ENCODE measurements at regions of chr3 and their contacts with region 1.

Region 1: GRCh38 chr3:10026084-10026890 is at the start of gene FANCD2:
- DNase-seq: peak; percentile 87
- H3K4me3 ChIP-seq: peak within 1 kb of the TSS; percentile 72 to 82 (median 81)
- H3K27ac ChIP-seq: peak within 1 kb of the TSS; percentile 88
- H3K4me1 ChIP-seq: peaks cover 25% of the 10 kb centered on the region
- H3K27me3 ChIP-seq: no peaks in the 10 kb centered on the region
- CTCF ChIP-seq: no peak
- total RNA-seq, gene FANCD2: 6.7 to 23.6 TPM

Region 2: GRCh38 chr3:9769426-9770275 is 256.6 kb before region 1 on chr3 and contains the start of gene CAMK1:
- CTCF ChIA-PET with region 1: no interaction called
- dilution Hi-C with region 1: no loop called
- in situ Hi-C with region 1: no loop called
- intact Hi-C with region 1: no loop called
- DNase-seq: peak; percentile 54
- H3K4me3 ChIP-seq: peak within 1 kb of the TSS in 2 of 3 experiments; percentile 39 to 41
- H3K27ac ChIP-seq: no peak within 1 kb of the TSS
- H3K4me1 ChIP-seq: peaks cover 4% of the 10 kb centered on the region
- H3K27me3 ChIP-seq: no peaks in the 10 kb centered on the region
- CTCF ChIP-seq: no peak
- total RNA-seq, gene CAMK1: 0.50 to 2.3 TPM

Region 3: DNA sequence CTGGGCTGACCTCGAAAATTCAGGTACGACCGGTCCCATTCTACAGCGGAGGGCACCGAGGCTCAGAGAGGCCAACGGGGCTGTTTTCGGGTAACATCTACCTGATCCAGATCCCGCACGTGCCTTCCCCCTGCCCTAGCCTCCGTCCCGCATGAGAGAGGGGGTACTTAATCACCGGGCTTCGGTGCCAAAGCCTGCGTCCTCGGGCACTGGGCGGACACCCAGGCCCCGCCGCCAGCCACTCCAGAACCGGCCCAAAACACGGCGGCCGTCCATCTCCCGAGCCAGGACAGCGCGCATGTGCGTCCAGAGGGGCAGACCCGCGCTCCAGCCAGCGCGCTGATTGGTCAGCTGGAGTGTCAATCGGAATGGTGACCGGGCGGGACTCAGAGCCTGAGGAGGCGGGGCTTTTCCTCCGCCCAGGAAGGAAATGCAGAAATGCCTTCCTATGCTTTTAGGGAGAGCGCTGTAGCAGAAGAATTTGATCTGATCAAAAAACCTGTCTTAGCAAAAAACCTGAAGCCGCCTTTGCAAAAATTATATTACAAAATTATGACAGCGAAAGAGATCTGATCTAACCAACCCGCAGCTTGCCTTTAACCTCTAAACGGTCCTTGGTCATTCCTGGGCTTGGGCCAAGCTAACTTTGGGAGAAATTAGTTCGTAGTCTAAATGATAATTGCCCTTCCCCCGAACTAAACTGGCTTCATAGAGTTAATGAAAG is 182.4 kb before region 1 on chr3 and contains the start of gene RPUSD3:
- CTCF ChIA-PET with region 1: no interaction called
- dilution Hi-C with region 1: no loop called
- in situ Hi-C with region 1: no loop called
- intact Hi-C with region 1: loop called (anchors 10 kb)
- DNase-seq: peak; percentile 92
- H3K4me3 ChIP-seq: peak within 1 kb of the TSS; percentile 62 to 68 (median 67)
- H3K27ac ChIP-seq: peak within 1 kb of the TSS; percentile 29
- H3K4me1 ChIP-seq: peaks cover 16% of the 10 kb centered on the region
- H3K27me3 ChIP-seq: no peaks in the 10 kb centered on the region
- CTCF ChIP-seq: no peak
- total RNA-seq, gene RPUSD3: 35.0 to 40.8 TPM

Region 4: GRCh38 chr3:9957214-9957613 is 69.1 kb before region 1 on chr3:
- CTCF ChIA-PET with region 1: no interaction called
- dilution Hi-C with region 1: loop called (anchors 5 kb)
- in situ Hi-C with region 1: no loop called
- intact Hi-C with region 1: no loop called
- DNase-seq: no peak
- H3K4me3 ChIP-seq: no peak overlapping the region
- H3K27ac ChIP-seq: no peak overlapping the region
- H3K4me1 ChIP-seq: peaks cover 2% of the 10 kb centered on the region
- H3K27me3 ChIP-seq: no peaks in the 10 kb centered on the region
- CTCF ChIP-seq: no peak

Region 5: DNA sequence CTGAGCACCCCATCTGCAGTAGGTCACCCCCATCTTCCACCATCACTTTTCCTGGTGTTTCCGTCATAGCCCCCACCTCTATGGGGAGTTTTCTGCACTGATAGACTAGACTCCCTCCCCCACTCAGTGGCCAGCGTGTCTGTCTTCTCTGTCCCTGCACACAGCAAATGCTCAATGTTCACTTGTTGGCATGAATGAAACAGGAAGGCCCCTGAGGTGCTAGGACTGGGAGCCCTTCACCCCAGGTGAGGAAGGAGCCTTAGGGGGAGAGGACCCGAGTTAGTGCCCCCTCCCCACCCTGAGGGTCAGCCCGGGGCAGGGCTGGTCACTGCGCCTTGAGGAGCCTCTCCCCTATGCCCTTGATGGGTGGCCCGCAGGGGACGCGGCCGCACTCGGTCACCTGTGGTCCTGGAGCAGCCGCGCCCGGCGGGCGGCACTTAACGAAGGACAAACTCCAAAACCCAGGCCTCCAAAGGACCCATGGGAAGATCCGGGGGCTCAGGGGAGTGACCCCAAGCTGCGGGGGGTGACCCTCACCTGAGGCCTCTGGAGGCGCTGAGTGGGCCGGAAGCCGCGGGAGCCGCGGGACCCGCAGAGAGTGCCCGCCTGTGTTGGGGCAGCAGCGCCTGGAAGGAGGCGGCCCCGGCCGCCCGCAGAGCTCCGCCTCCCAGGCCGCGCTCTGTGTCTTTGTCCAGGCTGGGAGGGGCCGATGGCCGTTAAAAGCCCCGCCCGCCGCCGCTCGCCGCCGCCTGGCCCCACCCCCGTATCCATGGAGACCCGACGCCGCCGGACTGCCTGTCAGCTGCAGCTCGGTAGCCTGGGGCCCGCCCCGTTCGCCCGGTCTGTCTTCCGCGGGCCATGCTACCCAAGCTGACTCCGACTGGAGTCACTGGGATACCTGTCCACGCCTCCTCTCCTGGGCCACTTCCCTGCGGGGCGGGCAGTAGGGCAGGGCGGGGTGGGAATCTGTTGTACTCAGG is 15.5 kb before region 1 on chr3:
- CTCF ChIA-PET with region 1: no interaction called
- dilution Hi-C with region 1: no loop called
- in situ Hi-C with region 1: no loop called
- intact Hi-C with region 1: loop called (anchors 1 kb)
- DNase-seq: peak; percentile 93
- H3K4me3 ChIP-seq: peak overlapping the region; percentile 55 to 78 (median 57)
- H3K27ac ChIP-seq: no peak overlapping the region
- H3K4me1 ChIP-seq: peaks cover 21% of the 10 kb centered on the region
- H3K27me3 ChIP-seq: no peaks in the 10 kb centered on the region
- CTCF ChIP-seq: no peak

Region 6: DNA sequence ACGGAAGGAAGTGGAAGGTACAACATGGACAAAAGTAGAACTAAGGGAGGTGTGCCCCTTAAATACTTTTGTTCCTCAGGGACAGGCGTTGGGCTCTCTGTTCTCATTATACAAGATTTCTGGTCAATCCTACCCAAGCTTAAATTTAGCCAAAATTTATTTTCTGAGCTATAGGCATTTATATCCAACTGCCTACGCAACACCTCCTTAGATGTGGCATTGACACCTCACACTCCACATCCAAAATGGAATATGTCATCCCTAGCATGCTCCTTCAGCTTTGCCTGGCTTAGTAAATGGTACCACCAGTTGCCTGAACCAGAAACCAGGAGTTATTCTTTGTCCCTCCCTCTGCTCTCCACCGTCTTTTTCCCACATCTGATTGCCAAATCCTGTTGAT is 55.6 kb after region 1 on chr3:
- CTCF ChIA-PET with region 1: no interaction called
- dilution Hi-C with region 1: loop called (anchors 5 kb)
- in situ Hi-C with region 1: no loop called
- intact Hi-C with region 1: no loop called
- DNase-seq: no peak
- H3K4me3 ChIP-seq: no peak overlapping the region
- H3K27ac ChIP-seq: no peak overlapping the region
- H3K4me1 ChIP-seq: no peaks in the 10 kb centered on the region
- H3K27me3 ChIP-seq: no peaks in the 10 kb centered on the region
- CTCF ChIP-seq: no peak

Region 7: DNA sequence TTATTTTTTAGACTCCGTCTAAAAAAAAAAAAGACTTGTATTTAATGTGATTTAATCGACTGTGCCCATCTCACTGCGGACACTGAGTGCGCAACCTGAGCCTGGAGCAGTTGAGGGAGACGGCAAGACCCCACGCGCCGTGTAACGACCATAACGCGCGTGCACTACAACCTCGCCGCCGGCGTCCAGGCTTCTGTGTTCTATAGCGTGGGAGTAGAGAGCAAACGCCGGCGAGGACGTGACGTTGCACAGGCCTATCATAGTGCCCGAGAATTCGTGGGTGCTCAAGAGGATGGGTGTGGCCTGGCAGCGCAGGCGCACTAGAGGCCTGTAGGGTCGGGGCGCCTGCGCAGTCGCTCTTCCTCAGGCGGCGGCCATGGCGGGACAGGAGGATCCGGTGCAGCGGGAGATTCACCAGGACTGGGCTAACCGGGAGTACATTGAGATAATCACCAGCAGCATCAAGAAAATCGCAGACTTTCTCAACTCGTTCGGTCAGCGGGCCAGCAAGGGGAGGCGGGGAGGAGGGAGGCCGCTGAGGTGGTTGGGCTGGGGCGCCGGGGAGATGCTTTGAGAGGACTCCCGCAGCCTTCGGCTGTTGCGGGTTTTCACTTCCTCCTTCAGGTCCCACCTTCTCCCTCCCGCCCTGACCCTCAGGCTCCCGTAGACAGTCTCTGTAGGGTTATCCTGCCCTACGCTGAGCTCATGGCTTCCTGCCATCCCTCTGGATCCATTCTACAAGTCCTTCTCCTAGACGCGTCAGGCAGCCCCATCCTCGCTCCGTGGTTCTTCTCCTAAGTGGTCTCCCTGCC is 89.2 kb after region 1 on chr3 and contains the start of gene BRK1:
- CTCF ChIA-PET with region 1: no interaction called
- dilution Hi-C with region 1: no loop called
- in situ Hi-C with region 1: no loop called
- intact Hi-C with region 1: no loop called
- DNase-seq: peak; percentile 93
- H3K4me3 ChIP-seq: peak within 1 kb of the TSS; percentile 82 to 99 (median 88)
- H3K27ac ChIP-seq: peak within 1 kb of the TSS; percentile 77
- H3K4me1 ChIP-seq: peaks cover 8% of the 10 kb centered on the region
- H3K27me3 ChIP-seq: no peaks in the 10 kb centered on the region
- CTCF ChIP-seq: no peak
- total RNA-seq, gene BRK1: 80.4 to 134 TPM

Region 8: DNA sequence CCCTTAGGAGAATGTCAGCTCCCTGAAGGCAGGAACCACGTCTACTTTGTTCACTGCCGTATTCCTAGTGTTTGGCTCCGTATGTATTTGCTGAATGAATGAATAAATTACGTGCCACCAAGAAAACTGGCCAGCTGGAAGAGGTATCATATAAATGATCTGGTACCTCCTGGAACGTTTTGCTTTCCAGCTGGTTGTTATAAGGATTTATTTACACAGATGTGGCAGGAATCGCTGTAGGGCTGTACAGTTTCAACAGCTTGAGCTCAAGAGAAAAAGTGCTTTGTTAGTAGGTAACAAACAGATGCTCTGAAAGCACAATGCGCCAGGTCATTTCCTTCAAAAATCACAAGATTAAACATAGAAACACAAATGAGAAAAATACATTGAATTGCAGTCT is 587.9 kb after region 1 on chr3:
- CTCF ChIA-PET with region 1: no interaction called
- dilution Hi-C with region 1: no loop called
- in situ Hi-C with region 1: no loop called
- intact Hi-C with region 1: no loop called
- DNase-seq: no peak
- H3K4me3 ChIP-seq: no peak overlapping the region
- H3K27ac ChIP-seq: no peak overlapping the region
- H3K4me1 ChIP-seq: no peaks in the 10 kb centered on the region
- H3K27me3 ChIP-seq: no peaks in the 10 kb centered on the region
- CTCF ChIP-seq: no peak